B cell (primary cell): ENCODE measurements at regions of chr4 and their contacts with region 1.

Region 1: GRCh38 chr4:165464813-165465381 is 86.1 kb downstream of the CPE start:
- DNase-seq: peak; percentile 60
- ATAC-seq: peak; percentile 45
- H3K4me3 ChIP-seq: no peak overlapping the region
- H3K4me3 Mint-ChIP-seq: no peak overlapping the region
- H3K27ac ChIP-seq: no peak overlapping the region
- H3K27ac Mint-ChIP-seq: no peak overlapping the region
- H3K4me1 ChIP-seq: no peaks in the 10 kb centered on the region
- H3K4me1 Mint-ChIP-seq: no peaks in the 10 kb centered on the region
- H3K27me3 ChIP-seq: peaks cover 0 to 3% (median 0%) of the 10 kb centered on the region in 4 experiments
- H3K27me3 Mint-ChIP-seq: peaks cover 8% of the 10 kb centered on the region
- CTCF ChIP-seq: peak; percentile 92

Region 2: DNA sequence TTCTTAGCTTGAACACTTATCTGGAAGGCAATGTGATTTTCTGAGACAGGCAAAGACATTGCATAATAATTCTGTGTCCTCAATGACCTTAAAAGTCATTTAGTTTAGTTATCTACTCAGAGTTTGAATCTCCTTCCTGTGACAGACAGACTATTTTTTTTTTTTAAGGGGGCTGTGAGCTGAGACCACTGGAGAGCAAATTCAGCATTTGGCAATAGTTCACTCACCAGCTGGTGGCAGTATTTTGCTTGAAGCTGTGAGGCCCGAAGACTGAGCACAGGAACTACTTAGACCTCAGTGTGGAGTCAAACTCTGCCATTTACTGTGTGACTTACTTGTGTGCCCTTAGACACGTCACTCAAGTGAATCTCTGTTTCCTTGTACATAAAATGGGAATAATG is 109.0 kb before region 1 on chr4:
- CTCF ChIA-PET with region 1: interaction called, 3 read pairs
- POLR2A ChIA-PET with region 1: interaction called, 9 read pairs
- intact Hi-C with region 1: loop called (anchors 2 kb)
- DNase-seq: peak; percentile 23
- ATAC-seq: peak; percentile 21
- H3K4me3 ChIP-seq: no peak overlapping the region
- H3K4me3 Mint-ChIP-seq: no peak overlapping the region
- H3K27ac ChIP-seq: no peak overlapping the region
- H3K27ac Mint-ChIP-seq: no peak overlapping the region
- H3K4me1 ChIP-seq: no peaks in the 10 kb centered on the region
- H3K4me1 Mint-ChIP-seq: peaks cover 1% of the 10 kb centered on the region
- H3K27me3 ChIP-seq: peaks cover 0 to 8% (median 7%) of the 10 kb centered on the region in 4 experiments
- H3K27me3 Mint-ChIP-seq: peaks cover 49% of the 10 kb centered on the region
- CTCF ChIP-seq: no peak